HepG2 (cell line): ENCODE measurements at regions of chr10 and their contacts with region 1.

Region 1: GRCh38 chr10:6401562-6402348 is 178.3 kb downstream of the PRKCQ start:
- DNase-seq: peak; percentile 83
- ATAC-seq: peak; percentile 98
- H3K4me3 ChIP-seq: peak overlapping the region in 2 of 3 experiments; percentile 51; a peak in 4 of 6 replicates
- H3K27ac ChIP-seq: no peak overlapping the region
- H3K4me1 ChIP-seq: peaks cover 6% of the 10 kb centered on the region; the same call in 1 of the 2 replicates
- H3K27me3 ChIP-seq: peaks cover 1 to 30% of the 10 kb centered on the region in 2 experiments; a peak in 3 of 5 replicates
- CTCF ChIP-seq: peak; percentile 93
- EP300 ChIP-seq: no peak
- POLR2A ChIP-seq: no peak
- RAD21 ChIP-seq: peak; percentile 87

Region 2: DNA sequence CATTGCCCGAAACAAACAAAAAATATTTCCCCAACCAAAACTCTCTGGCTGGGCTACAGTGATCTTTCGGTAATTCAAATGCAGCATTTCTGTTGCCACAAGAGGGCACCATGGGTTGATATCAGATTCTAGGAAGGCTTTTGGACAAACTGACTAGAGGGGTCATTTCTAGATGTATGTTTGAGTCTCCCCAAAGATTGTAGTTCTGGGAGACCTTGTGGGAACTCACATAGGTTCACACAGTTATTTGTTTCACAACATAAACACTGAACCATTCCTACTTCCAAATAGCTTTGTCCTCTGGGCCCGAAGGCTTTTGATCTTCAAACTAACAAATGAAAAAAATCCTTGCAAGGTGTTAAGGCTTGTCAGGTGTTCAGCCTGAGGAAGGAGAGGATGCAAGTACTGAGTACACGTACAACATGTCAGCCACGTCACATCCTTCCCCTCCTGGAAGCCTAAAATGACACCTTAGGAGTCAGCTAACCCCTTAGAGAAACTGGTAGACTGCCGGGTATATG is 387.5 kb before region 1 on chr10:
- CTCF ChIA-PET with region 1: interaction called, 3 read pairs
- POLR2A ChIA-PET with region 1: no interaction called
- in situ Hi-C with region 1: no loop called
- intact Hi-C with region 1: loop called (anchors 5 kb)
- DNase-seq: peak; percentile 34
- ATAC-seq: peak; percentile 71
- H3K4me3 ChIP-seq: no peak overlapping the region
- H3K27ac ChIP-seq: no peak overlapping the region
- H3K4me1 ChIP-seq: no peaks in the 10 kb centered on the region
- H3K27me3 ChIP-seq: peaks cover 0 to 57% of the 10 kb centered on the region in 2 experiments; a peak in 4 of 5 replicates
- CTCF ChIP-seq: peak; percentile 68
- EP300 ChIP-seq: no peak
- POLR2A ChIP-seq: no peak
- RAD21 ChIP-seq: no peak

Region 3: DNA sequence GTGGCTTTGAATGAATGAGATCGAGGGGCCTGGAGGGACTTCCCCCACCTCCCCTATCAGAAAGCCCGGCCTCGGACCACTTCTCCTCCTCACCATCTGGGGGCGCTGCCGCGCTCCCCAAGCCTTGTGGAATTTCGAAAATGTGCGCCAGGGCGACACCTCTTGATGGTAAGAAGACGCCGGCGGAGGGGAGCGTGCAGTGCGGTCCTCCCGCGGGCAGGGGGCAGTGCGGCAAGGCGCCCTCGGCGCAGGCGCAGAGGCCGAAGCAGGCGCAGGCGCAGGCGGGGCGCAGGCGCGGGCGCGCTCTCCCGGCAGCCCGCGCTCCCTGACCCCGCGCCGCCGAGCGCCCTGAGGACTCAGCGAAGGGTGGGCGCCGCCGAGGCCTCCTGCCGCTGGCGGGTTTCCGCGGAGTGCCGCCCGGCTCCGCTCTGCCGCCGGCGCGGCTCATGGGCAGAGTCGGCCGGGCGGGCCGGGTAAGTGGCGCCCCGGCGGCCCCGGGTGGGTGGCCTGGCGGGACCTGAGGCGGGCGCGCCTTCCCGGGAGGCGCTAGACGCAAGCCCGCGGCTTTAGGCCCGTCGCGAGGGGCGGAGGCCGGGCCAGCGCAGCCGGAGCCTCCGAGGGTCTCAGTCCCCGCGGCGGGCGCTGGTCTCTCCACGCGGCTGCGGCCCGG is 312.9 kb before region 1 on chr10 and contains the start of gene RBM17:
- CTCF ChIA-PET with region 1: interaction called, 25 read pairs
- POLR2A ChIA-PET with region 1: no interaction called
- in situ Hi-C with region 1: no loop called
- intact Hi-C with region 1: loop called (anchors 5 kb)
- DNase-seq: peak; percentile 88
- ATAC-seq: peak; percentile 90
- H3K4me3 ChIP-seq: peak within 1 kb of the TSS; percentile 90 to 99 (median 91)
- H3K27ac ChIP-seq: peak within 1 kb of the TSS; percentile 72
- H3K4me1 ChIP-seq: peaks cover 38% of the 10 kb centered on the region
- H3K27me3 ChIP-seq: peaks cover 0 to 4% of the 10 kb centered on the region in 2 experiments; a peak in 2 of 5 replicates
- CTCF ChIP-seq: peak; percentile 96
- EP300 ChIP-seq: peak in 1 of 2 experiments; percentile 43; a peak in 1 of 4 replicates
- POLR2A ChIP-seq: peak; percentile 65 to 66; a peak in 2 of 4 replicates
- RAD21 ChIP-seq: peak; percentile 75
- total RNA-seq, gene RBM17: 63.3 and 77.5 TPM in 2 replicates

Region 4: GRCh38 chr10:6108603-6109443 is 292.9 kb before region 1 on chr10:
- CTCF ChIA-PET with region 1: interaction called, 25 read pairs
- POLR2A ChIA-PET with region 1: no interaction called
- in situ Hi-C with region 1: loop called (anchors 5 kb)
- intact Hi-C with region 1: loop called (anchors 1 kb)
- DNase-seq: peak; percentile 42
- ATAC-seq: no peak
- H3K4me3 ChIP-seq: no peak overlapping the region
- H3K27ac ChIP-seq: no peak overlapping the region
- H3K4me1 ChIP-seq: peaks cover 13% of the 10 kb centered on the region
- H3K27me3 ChIP-seq: no peaks in the 10 kb centered on the region
- CTCF ChIP-seq: peak; percentile 67
- EP300 ChIP-seq: no peak
- POLR2A ChIP-seq: no peak
- RAD21 ChIP-seq: peak; percentile 50; the same call in 1 of the 2 replicates

Region 5: GRCh38 chr10:6171881-6172695 is 229.7 kb before region 1 on chr10:
- CTCF ChIA-PET with region 1: no interaction called
- POLR2A ChIA-PET with region 1: no interaction called
- in situ Hi-C with region 1: loop called (anchors 10 kb)
- intact Hi-C with region 1: loop called (anchors 1 kb)
- DNase-seq: no peak
- ATAC-seq: no peak
- H3K4me3 ChIP-seq: no peak overlapping the region
- H3K27ac ChIP-seq: no peak overlapping the region
- H3K4me1 ChIP-seq: peaks cover 17% of the 10 kb centered on the region
- H3K27me3 ChIP-seq: peaks cover 0 to 2% of the 10 kb centered on the region in 2 experiments; a peak in 1 of 5 replicates
- CTCF ChIP-seq: no peak
- EP300 ChIP-seq: no peak
- POLR2A ChIP-seq: no peak
- RAD21 ChIP-seq: no peak

Region 6: DNA sequence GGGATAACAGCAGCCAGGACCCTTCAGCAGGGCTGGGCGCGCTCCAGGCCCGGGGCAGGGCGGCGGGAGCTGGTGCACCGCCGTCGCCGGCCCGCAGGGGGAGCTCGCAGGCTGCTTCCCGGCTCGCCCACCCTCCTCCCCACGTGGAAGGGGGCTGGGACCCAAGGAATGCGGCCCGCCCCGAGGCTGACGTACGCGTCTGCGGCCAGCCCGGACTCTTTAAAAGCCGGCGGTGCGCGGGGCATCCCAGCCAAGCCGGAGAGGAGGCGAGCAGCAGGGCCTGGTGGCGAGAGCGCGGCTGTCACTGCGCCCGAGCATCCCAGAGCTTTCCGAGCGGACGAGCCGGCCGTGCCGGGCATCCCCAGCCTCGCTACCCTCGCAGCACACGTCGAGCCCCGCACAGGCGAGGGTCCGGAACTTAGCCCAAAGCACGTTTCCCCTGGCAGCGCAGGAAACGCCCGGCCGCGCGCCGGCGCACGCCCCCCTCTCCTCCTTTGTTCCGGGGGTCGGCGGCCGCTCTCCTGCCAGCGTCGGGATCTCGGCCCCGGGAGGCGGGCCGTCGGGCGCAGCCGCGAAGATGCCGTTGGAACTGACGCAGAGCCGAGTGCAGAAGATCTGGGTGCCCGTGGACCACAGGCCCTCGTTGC is 198.9 kb before region 1 on chr10 and contains the start of gene PFKFB3:
- CTCF ChIA-PET with region 1: interaction called, 22 read pairs
- POLR2A ChIA-PET with region 1: interaction called, 4 read pairs
- in situ Hi-C with region 1: loop called (anchors 5 kb)
- intact Hi-C with region 1: loop called (anchors 1 kb)
- DNase-seq: peak; percentile 81
- ATAC-seq: peak; percentile 86
- H3K4me3 ChIP-seq: peak within 1 kb of the TSS; percentile 64 to 93 (median 79)
- H3K27ac ChIP-seq: no peak within 1 kb of the TSS
- H3K4me1 ChIP-seq: peaks cover 36% of the 10 kb centered on the region
- H3K27me3 ChIP-seq: peaks cover 0 to 11% of the 10 kb centered on the region in 2 experiments; a peak in 1 of 5 replicates
- CTCF ChIP-seq: peak; percentile 89
- EP300 ChIP-seq: no peak; a peak in 1 of 4 replicates
- POLR2A ChIP-seq: peak in 1 of 2 experiments; percentile 92; a peak in 2 of 4 replicates
- RAD21 ChIP-seq: peak; percentile 93
- total RNA-seq, gene PFKFB3: 0.87 and 1.2 TPM in 2 replicates

Region 7: DNA sequence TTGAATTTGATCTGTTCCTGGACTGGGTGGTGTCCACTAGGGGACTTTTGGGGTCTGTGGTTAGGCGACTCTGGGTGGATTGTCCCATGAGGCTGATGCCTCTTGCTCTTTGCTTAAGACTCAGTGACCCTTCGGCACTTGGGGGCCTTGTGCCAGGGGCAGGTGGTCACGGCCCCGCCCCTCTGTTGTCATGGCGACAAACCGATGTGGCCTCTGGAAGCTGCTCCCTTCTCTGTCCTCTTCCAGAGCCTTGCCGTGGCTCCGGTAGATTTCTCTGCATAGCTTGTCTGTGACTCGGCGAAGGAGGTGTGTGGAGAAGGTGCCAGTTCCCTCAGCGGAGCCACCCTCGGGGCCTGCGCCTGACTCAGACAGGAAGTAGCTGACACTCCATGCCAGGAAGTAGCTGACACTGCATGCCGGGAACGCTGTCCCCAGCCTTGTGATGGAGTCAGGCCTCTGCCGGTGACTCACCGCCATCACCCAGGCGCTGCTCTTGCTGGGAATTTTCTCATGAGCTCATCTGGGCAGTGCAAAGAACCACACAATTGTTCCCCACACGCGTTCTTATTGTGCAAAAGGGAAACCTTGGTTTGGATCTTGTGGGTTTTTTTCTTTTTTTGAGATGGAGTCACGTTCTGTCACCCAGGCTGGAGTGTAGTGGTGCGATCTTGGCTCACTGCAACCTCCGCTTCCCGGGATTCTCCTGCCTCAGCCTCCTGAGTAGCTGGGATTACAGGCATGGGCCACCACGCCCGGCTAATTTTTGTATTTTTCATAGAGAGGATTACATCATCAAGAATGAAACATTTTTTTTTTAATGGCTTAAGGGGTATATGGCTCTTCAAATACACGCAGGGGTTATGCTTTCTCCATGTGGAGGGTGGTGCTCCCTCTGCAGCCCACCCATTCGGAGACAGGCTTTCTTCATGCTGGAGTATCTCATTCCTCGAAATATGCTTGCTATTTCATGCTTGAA is 126.4 kb before region 1 on chr10:
- CTCF ChIA-PET with region 1: no interaction called
- POLR2A ChIA-PET with region 1: no interaction called
- in situ Hi-C with region 1: no loop called
- intact Hi-C with region 1: loop called (anchors 10 kb)
- DNase-seq: peak; percentile 53
- ATAC-seq: no peak
- H3K4me3 ChIP-seq: no peak overlapping the region
- H3K27ac ChIP-seq: no peak overlapping the region
- H3K4me1 ChIP-seq: peaks cover 69% of the 10 kb centered on the region
- H3K27me3 ChIP-seq: 0 out of 5 replicates have a peak, but pooled peaks cover 0 to 16% of the 10 kb centered on the region in 2 experiments
- CTCF ChIP-seq: no peak
- EP300 ChIP-seq: no peak
- POLR2A ChIP-seq: no peak
- RAD21 ChIP-seq: no peak

Region 8: GRCh38 chr10:6314620-6315205 is 87.0 kb before region 1 on chr10:
- CTCF ChIA-PET with region 1: no interaction called
- POLR2A ChIA-PET with region 1: no interaction called
- in situ Hi-C with region 1: no loop called
- intact Hi-C with region 1: no loop called
- DNase-seq: no peak
- ATAC-seq: no peak; the same call in 2 of the 3 replicates
- H3K4me3 ChIP-seq: no peak overlapping the region
- H3K27ac ChIP-seq: no peak overlapping the region
- H3K4me1 ChIP-seq: no peaks in the 10 kb centered on the region; the same call in 1 of the 2 replicates
- H3K27me3 ChIP-seq: peaks cover 0 to 44% of the 10 kb centered on the region in 2 experiments; a peak in 2 of 5 replicates
- CTCF ChIP-seq: no peak
- EP300 ChIP-seq: no peak
- POLR2A ChIP-seq: no peak
- RAD21 ChIP-seq: no peak